ENCODE measurements at regions of chr2 and their contacts with region 1.

Region 1: DNA sequence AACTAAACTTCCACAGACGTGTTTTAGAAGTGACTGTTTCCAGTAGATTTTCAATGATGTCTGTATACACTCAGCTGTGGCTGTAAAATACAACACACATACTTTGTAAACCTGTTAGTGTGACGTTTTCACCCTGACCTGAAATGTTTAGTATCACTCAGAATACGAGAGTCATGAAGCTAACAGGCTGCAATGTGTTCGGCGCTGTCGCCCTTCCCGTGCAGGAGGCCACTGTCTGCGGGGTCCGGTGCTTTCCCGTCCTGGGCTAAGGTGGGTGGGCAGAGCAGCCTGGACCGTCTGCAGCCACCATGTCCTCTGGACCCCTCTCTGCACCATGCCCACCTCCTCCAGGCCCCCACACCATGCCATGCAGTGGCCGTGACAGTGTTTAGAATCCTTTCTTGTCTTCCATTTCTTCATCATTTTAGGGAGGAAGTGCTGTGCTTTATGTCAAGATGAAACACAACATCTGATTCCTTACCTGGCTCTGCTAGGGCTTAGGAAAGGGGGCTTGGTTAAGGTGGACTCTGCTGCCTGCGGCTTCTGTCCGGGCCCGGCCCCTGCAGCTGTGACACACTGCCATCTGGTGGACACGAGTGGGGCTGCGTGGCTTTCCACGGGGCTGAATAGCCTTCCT is 53.8 kb upstream of the RBM44 start:
- DNase-seq: peak; percentile 55
- H3K4me3 ChIP-seq: no peak overlapping the region
- H3K27ac ChIP-seq: no peak overlapping the region
- H3K4me1 ChIP-seq: peaks cover 13% of the 10 kb centered on the region
- CTCF ChIP-seq: peak; percentile 99

Region 2: GRCh38 chr2:237223201-237223861 is 521.4 kb before region 1 on chr2:
- CTCF ChIA-PET with region 1: no interaction called
- POLR2A ChIA-PET with region 1: no interaction called
- intact Hi-C with region 1: no loop called
- DNase-seq: no peak
- H3K4me3 ChIP-seq: no peak overlapping the region
- H3K27ac ChIP-seq: no peak overlapping the region
- H3K4me1 ChIP-seq: no peaks in the 10 kb centered on the region
- CTCF ChIP-seq: no peak

Region 3: DNA sequence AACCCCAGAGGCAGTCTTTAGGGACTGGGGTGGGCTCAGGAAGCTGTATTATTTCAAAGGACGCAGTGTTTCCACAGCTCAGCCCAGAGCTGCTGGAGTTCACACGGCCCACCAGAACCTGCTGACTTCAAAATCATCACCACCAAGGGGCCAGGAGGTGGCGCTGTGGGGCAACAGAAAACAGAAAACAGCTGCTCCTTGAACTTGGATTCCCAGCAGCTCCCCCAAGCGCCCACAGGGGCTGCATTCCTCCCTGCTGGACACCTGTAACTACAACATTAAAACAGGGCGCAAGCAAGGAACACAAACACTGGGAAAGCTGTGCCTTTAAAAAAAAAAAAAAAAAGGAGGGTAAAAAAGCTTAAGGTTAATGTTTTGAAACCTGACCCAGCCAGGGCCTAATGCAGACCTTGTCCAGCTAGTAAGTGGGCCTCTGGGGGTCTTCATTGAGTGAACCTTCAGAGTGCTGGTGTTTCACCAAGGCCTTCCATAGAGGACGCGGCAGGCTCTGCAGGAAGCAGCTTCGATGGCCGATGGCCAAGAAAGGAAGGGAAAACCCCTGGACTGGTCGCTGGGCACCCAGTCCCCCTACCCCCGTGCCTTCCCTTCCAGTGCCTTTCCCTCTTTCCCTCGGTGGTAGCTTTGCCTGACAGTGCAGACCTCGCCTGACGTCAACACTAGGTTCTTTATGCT is 231.8 kb before region 1 on chr2:
- CTCF ChIA-PET with region 1: no interaction called
- POLR2A ChIA-PET with region 1: no interaction called
- intact Hi-C with region 1: loop called (anchors 2 kb)
- DNase-seq: peak; percentile 85
- H3K4me3 ChIP-seq: no peak overlapping the region
- H3K27ac ChIP-seq: no peak overlapping the region
- H3K4me1 ChIP-seq: peaks cover 33% of the 10 kb centered on the region
- CTCF ChIP-seq: peak; percentile 97

Region 4: GRCh38 chr2:237581751-237582746 is 162.7 kb before region 1 on chr2:
- CTCF ChIA-PET with region 1: no interaction called
- POLR2A ChIA-PET with region 1: no interaction called
- intact Hi-C with region 1: loop called (anchors 2 kb)
- DNase-seq: peak; percentile 62
- H3K4me3 ChIP-seq: no peak overlapping the region
- H3K27ac ChIP-seq: no peak overlapping the region
- H3K4me1 ChIP-seq: no peaks in the 10 kb centered on the region
- CTCF ChIP-seq: peak; percentile 70

Region 5: DNA sequence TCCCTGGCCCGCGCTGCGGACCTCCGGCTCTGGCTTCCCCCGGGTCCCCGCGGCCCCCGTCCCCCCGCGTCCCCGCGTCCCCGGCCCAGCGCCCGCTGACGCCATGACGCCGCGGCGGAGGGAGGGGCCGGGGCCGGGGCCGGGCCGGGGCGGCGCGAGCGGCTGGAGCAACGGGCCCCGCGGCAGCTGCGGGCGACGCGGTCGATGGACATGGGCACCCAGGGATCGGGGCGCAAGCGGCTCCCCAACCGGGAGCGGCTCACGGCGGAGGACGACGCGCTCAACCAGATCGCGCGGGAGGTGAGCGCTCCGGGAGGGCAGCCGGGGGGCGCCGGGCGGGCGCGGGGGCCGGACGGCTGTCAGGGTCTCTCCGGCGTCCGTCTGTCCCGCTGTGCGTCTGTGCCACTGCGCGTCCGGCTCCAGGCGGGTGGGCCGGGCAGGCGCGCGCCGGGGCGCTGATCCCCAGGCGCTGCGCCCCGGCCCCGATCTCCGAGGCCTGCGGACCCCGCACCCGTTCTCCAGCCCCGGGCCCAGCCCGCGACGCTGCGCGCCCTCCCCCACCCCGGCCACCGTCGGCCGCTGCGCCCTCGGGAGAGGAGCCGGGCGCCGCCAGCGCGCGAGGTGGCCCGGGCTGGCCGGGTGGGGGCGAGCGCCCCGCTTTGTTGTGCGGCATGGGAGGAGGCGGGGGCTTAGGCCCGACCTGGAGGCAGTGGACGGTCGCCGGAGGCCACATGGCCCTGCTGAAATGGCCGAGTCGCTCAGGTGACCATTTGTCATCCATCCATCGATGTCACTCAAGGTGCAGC is 117.1 kb before region 1 on chr2 and contains the start of gene LRRFIP1:
- CTCF ChIA-PET with region 1: no interaction called
- POLR2A ChIA-PET with region 1: no interaction called
- intact Hi-C with region 1: loop called (anchors 2 kb)
- DNase-seq: no peak
- H3K4me3 ChIP-seq: no peak within 1 kb of the TSS
- H3K27ac ChIP-seq: no peak within 1 kb of the TSS
- H3K4me1 ChIP-seq: peaks cover 32% of the 10 kb centered on the region
- CTCF ChIP-seq: no peak
- total RNA-seq, gene LRRFIP1: 95.7 and 102 TPM in 2 replicates

Region 6: DNA sequence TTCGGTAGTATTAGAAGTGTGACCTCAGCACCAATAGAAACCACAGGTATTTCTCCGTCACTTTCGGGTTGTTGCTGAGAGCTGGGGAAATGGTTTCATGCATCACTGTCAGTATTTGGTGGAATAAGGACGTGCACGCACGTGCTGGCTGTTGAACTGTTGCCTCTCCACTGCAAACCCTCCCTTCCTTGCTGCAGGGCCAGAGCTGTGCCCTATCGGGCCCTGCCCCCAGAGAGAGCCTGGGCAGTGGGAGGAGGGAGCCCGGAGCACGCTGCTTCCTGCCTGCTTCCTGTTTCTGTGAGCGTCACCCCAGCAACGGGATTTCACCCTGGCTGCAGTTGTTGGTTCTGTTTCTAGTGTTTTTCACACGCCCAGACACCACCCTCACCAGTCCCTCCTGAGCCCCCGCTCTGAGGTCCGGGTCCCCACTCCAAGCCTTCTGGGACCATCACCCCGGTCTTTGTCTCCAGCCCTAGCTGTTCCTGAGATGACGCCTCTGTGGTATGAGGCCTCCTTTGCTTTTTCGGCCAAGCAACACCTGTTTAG is 69.9 kb before region 1 on chr2:
- CTCF ChIA-PET with region 1: interaction called, 3 read pairs
- POLR2A ChIA-PET with region 1: interaction called, 6 read pairs
- intact Hi-C with region 1: loop called (anchors 1 kb)
- DNase-seq: peak; percentile 86
- H3K4me3 ChIP-seq: peak overlapping the region; percentile 65
- H3K27ac ChIP-seq: peak overlapping the region; percentile 97
- H3K4me1 ChIP-seq: peaks cover 86% of the 10 kb centered on the region
- CTCF ChIP-seq: no peak

Region 7: GRCh38 chr2:237700512-237701032 is 44.2 kb before region 1 on chr2:
- CTCF ChIA-PET with region 1: interaction called, 3 read pairs
- POLR2A ChIA-PET with region 1: interaction called, 8 read pairs
- intact Hi-C with region 1: loop called (anchors 1 kb)
- DNase-seq: peak; percentile 29
- H3K4me3 ChIP-seq: peak overlapping the region; percentile 34
- H3K27ac ChIP-seq: peak overlapping the region; percentile 43
- H3K4me1 ChIP-seq: peaks cover 83% of the 10 kb centered on the region
- CTCF ChIP-seq: no peak

Region 8: GRCh38 chr2:237723602-237724001 is 21.1 kb before region 1 on chr2:
- CTCF ChIA-PET with region 1: no interaction called
- POLR2A ChIA-PET with region 1: no interaction called
- intact Hi-C with region 1: no loop called
- DNase-seq: peak; percentile 70
- H3K4me3 ChIP-seq: no peak overlapping the region
- H3K27ac ChIP-seq: no peak overlapping the region
- H3K4me1 ChIP-seq: peaks cover 13% of the 10 kb centered on the region
- CTCF ChIP-seq: peak; percentile 22; the same call in 1 of the 2 replicates

Region 9: DNA sequence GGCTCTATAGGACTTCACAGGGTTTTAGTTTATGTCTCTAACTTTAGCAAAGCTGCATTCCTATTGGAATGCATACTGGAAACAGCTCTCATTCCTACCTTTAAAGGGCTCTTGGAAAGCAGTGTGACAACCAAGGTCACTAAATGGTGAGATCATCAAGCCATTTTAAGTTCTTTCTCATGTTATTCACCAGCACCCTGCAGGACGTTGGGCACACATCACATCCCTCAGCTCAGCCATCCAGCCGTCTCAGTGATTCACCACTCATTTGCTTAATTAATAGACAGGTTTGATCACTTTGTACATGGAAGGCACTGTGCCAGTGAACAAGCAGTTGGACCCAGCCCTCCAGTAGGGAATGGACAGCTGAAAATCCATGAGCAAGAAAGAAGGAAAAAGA is 21.6 kb after region 1 on chr2:
- CTCF ChIA-PET with region 1: no interaction called
- POLR2A ChIA-PET with region 1: no interaction called
- intact Hi-C with region 1: no loop called
- DNase-seq: no peak
- H3K4me3 ChIP-seq: no peak overlapping the region
- H3K27ac ChIP-seq: no peak overlapping the region
- H3K4me1 ChIP-seq: no peaks in the 10 kb centered on the region
- CTCF ChIP-seq: no peak

Measured in OCI-LY7 (cell line).